Right cardiac atrium (tissue), 5 donors: ENCODE measurements at regions of chr9 and their contacts with region 1.

Region 1: GRCh38 chr9:126500684-126501382 is 112.9 kb upstream of the LMX1B start:
- DNase-seq: peak; percentile 79 to 92 (median 91)
- ATAC-seq: peak; percentile 74
- H3K4me3 ChIP-seq: no peak overlapping the region
- H3K27ac ChIP-seq: no peak overlapping the region
- H3K4me1 ChIP-seq: no peaks in the 10 kb centered on the region
- H3K27me3 ChIP-seq: no peaks in the 10 kb centered on the region

Region 2: DNA sequence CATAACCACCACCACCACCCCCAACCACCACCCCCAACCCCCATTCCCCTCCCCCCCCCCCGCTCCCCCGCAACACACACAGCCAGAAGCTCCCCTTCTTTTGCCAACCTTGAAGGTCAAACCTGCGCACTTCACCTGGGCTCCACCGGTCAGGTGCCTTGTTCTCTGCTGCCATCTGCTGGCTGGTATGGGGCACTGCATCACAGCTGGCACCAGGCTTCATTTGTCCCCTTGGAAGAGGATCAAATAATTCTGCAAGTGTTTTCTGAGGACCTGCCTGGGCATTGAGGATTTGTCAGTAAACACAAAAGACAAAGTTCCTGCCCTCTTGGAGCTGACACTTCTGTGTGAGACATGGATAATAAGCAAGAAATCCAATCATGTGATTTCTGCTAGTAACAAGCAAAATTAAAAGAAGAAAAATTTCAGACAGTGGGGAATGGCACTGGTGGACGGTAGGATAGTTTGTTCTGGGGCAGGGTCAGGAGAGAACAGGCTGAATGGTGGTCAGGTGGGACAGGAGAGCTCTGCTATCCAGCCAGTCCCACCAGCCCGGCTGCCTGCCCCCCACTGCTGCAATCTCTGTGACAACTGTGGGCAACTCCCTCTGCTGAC is 57.3 kb after region 1 on chr9:
- intact Hi-C with region 1: loop called (anchors 2 kb)
- DNase-seq: peak in 2 of 3 donors; percentile 74 to 78
- ATAC-seq: peak; percentile 53 to 63
- H3K4me3 ChIP-seq: no peak overlapping the region
- H3K27ac ChIP-seq: no peak overlapping the region
- H3K4me1 ChIP-seq: no peaks in the 10 kb centered on the region
- H3K27me3 ChIP-seq: no peaks in the 10 kb centered on the region

Region 3: GRCh38 chr9:126773004-126773607 is 272.3 kb after region 1 on chr9:
- intact Hi-C with region 1: loop called in 1 of 4 experiments (anchors 10 kb)
- DNase-seq: no peak
- ATAC-seq: peak in 1 of 2 donors; percentile 24
- H3K4me3 ChIP-seq: no peak overlapping the region
- H3K27ac ChIP-seq: no peak overlapping the region
- H3K4me1 ChIP-seq: no peaks in the 10 kb centered on the region
- H3K27me3 ChIP-seq: no peaks in the 10 kb centered on the region